ENCODE measurements at regions of chr9 and their contacts with region 1.

Region 1: DNA sequence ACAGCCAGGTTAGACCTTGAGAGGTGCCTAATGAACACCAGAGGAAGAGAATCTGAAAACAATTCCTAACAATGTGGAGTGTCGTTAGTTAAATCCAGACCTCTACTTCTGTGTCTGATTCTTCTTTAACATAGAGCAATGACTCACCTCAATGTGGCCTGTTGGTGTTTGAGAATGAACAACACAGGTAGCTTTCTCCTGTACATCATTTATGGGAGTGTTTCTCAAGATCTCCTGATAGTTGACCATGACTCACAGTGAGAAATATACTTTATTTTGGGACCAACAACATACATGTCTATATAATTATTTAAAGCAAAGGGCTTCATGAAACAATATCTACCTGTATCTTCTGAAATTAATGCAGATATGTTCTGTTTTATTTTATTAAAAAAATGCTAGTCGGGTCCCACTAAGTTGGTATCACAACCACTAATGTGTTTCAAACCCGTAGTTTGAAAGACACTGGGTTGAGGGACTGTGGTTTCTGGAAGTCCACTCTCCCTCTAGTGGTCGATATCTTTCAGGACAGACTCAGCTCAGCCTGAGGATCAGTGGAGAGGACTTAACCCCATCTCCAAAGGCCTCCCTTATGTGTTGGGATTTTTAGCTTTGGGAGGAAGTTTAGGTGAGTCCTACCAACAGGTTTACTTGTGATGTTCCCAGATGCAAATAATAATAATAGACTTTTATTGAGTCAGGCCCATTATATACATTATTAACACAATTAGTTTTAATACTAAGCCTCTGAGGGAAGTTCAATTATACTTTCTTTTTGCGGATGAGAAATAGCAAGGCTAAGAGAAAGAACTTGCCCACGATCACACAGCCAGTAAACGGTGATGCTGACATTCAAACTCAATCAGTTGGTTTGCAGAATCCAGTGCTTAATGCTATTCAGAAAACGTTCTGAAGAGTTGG is 70.0 kb upstream of the KLF9 start:
- DNase-seq: peak; percentile 67
- ATAC-seq: peak; percentile 78
- H3K4me3 ChIP-seq: no peak overlapping the region
- H3K4me3 Mint-ChIP-seq: no peak overlapping the region
- H3K27ac ChIP-seq: no peak overlapping the region
- H3K27ac Mint-ChIP-seq: no peak overlapping the region
- H3K4me1 ChIP-seq: no peaks in the 10 kb centered on the region
- H3K4me1 Mint-ChIP-seq: peaks cover 1% of the 10 kb centered on the region
- H3K27me3 ChIP-seq: peaks cover 0 to 3% (median 0%) of the 10 kb centered on the region in 4 experiments
- H3K27me3 Mint-ChIP-seq: peaks cover 24% of the 10 kb centered on the region
- CTCF ChIP-seq: peak; percentile 73

Region 2: DNA sequence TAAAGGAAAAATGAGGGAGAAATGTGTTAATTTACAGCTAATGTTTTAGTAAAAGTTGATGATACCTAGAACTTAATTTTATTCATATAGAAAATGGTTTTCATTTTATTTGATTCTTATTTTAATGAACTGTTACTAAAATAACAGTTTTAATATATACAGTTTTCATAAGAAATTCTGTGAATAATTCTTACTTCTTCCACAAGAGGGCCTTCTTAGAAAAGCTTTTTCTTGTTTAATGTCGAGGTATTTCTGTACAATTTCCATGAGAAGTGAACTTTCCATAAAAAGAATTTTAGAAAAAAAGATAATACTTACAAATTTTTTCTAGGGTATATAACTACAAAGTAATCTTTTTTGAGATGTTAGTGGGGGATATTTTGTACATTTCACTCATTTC is 143.9 kb before region 1 on chr9:
- CTCF ChIA-PET with region 1: interaction called, 28 read pairs
- POLR2A ChIA-PET with region 1: no interaction called
- intact Hi-C with region 1: loop called (anchors 1 kb)
- DNase-seq: peak; percentile 32
- ATAC-seq: no peak
- H3K4me3 ChIP-seq: no peak overlapping the region
- H3K4me3 Mint-ChIP-seq: no peak overlapping the region
- H3K27ac ChIP-seq: no peak overlapping the region
- H3K27ac Mint-ChIP-seq: no peak overlapping the region
- H3K4me1 ChIP-seq: no peaks in the 10 kb centered on the region
- H3K4me1 Mint-ChIP-seq: no peaks in the 10 kb centered on the region
- H3K27me3 ChIP-seq: no peaks in the 10 kb centered on the region
- H3K27me3 Mint-ChIP-seq: no peaks in the 10 kb centered on the region
- CTCF ChIP-seq: peak; percentile 78

Region 3: GRCh38 chr9:70352802-70353201 is 131.7 kb before region 1 on chr9:
- CTCF ChIA-PET with region 1: interaction called, 20 read pairs
- POLR2A ChIA-PET with region 1: no interaction called
- intact Hi-C with region 1: loop called (anchors 1 kb)
- DNase-seq: peak; percentile 24
- ATAC-seq: no peak
- H3K4me3 ChIP-seq: no peak overlapping the region
- H3K4me3 Mint-ChIP-seq: no peak overlapping the region
- H3K27ac ChIP-seq: no peak overlapping the region
- H3K27ac Mint-ChIP-seq: no peak overlapping the region
- H3K4me1 ChIP-seq: no peaks in the 10 kb centered on the region
- H3K4me1 Mint-ChIP-seq: no peaks in the 10 kb centered on the region
- H3K27me3 ChIP-seq: no peaks in the 10 kb centered on the region
- H3K27me3 Mint-ChIP-seq: no peaks in the 10 kb centered on the region
- CTCF ChIP-seq: peak; percentile 75

Region 4: DNA sequence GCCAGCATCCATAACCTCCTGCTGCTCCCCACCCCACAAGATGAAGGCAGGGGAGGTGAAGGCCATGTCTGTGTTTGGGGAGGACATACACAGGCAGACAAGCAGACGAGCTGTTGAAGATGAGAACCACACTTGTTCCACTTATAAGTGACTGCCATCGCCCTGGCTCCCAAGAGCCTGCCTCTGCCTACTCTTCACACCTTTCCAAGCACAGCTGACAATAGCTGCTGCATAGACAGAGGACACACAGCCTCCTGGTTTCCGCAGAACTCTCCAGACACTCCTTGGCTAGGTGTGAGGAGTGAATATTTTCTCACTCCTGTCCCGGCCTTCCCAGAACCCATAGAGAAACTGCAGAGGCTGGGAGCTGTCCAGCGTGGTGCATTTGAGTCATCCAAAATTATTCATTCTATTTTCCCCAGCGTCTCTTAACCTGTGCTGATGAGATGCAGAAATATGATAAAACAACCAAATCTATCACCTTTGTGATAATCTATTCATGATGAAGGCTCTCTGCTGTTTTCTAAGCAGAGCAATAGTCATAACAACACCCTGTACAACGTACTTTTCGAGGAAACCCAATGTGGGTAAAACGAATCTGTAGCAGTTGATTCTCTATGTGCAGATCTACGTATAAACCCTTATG is 94.7 kb before region 1 on chr9:
- CTCF ChIA-PET with region 1: interaction called, 12 read pairs
- POLR2A ChIA-PET with region 1: no interaction called
- intact Hi-C with region 1: no loop called
- DNase-seq: no peak
- ATAC-seq: no peak
- H3K4me3 ChIP-seq: no peak overlapping the region
- H3K4me3 Mint-ChIP-seq: no peak overlapping the region
- H3K27ac ChIP-seq: no peak overlapping the region
- H3K27ac Mint-ChIP-seq: no peak overlapping the region
- H3K4me1 ChIP-seq: peaks cover 9 to 11% of the 10 kb centered on the region in 2 donors
- H3K4me1 Mint-ChIP-seq: peaks cover 45% of the 10 kb centered on the region
- H3K27me3 ChIP-seq: no peaks in the 10 kb centered on the region
- H3K27me3 Mint-ChIP-seq: no peaks in the 10 kb centered on the region
- CTCF ChIP-seq: no peak

Region 5: DNA sequence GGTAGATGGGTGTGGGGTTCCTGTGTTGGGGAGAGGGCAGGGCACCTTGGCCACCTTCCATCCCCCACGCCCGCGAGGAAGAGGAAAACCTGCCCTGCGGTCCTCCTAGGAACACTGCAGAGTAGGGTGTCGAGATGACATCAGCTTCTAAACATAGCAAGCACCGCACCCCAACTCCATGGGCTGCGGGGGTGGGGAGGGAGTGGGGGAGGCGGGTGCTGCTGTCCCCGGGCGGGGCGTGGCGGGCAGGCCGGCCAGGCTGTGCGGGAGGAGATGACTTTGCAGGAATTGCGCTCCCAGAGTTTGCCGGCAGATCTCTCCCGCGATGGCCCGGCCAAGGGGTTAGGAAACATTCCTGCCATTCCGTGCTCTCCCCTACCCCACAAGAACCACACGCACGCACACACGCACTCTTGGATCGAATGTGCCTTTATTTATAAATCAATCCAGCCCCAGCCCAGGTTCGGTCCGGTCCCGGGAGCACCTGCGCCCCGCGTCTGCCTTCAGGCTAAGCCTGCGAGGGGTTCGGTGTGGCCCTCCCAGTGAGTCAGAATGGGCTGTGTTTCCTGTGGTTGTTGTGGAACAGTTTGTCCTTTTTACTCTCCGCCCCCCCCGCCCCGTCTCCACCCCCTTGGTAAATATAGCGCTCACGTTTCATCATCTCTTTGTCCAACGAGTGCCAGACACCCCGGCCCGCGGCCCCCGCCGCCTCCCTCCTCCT is 64.8 kb before region 1 on chr9:
- CTCF ChIA-PET with region 1: interaction called, 22 read pairs
- POLR2A ChIA-PET with region 1: interaction called, 3 read pairs
- intact Hi-C with region 1: loop called (anchors 2 kb)
- DNase-seq: peak; percentile 89
- ATAC-seq: peak; percentile 51
- H3K4me3 ChIP-seq: peak overlapping the region; percentile 38 to 89 (median 77)
- H3K4me3 Mint-ChIP-seq: peak overlapping the region; percentile 96
- H3K27ac ChIP-seq: peak overlapping the region; percentile 94 to 99
- H3K27ac Mint-ChIP-seq: peak overlapping the region; percentile 100
- H3K4me1 ChIP-seq: peaks cover 21 to 36% of the 10 kb centered on the region in 2 donors
- H3K4me1 Mint-ChIP-seq: peaks cover 43% of the 10 kb centered on the region
- H3K27me3 ChIP-seq: no peaks in the 10 kb centered on the region
- H3K27me3 Mint-ChIP-seq: no peaks in the 10 kb centered on the region
- CTCF ChIP-seq: no peak

Region 6: GRCh38 chr9:70495514-70495913 is 11.0 kb after region 1 on chr9:
- CTCF ChIA-PET with region 1: interaction called, 12 read pairs
- POLR2A ChIA-PET with region 1: no interaction called
- intact Hi-C with region 1: no loop called
- DNase-seq: no peak
- ATAC-seq: no peak
- H3K4me3 ChIP-seq: no peak overlapping the region
- H3K4me3 Mint-ChIP-seq: no peak overlapping the region
- H3K27ac ChIP-seq: no peak overlapping the region
- H3K27ac Mint-ChIP-seq: no peak overlapping the region
- H3K4me1 ChIP-seq: peaks cover 26% of the 10 kb centered on the region in 2 donors
- H3K4me1 Mint-ChIP-seq: peaks cover 18% of the 10 kb centered on the region
- H3K27me3 ChIP-seq: peaks cover 0 to 4% (median 0%) of the 10 kb centered on the region in 4 experiments
- H3K27me3 Mint-ChIP-seq: peaks cover 8% of the 10 kb centered on the region
- CTCF ChIP-seq: no peak

Measured in B cell (primary cell).